Activated CD4-positive, alpha-beta T cell treated with anti-CD3 and anti-CD28 coated beads for 36 hours (primary cell): ENCODE measurements at regions of chr3 and their contacts with region 1.

Region 1: GRCh38 chr3:31768479-31769123 is 212.5 kb downstream of the OSBPL10 start:
- DNase-seq: peak; percentile 77
- ATAC-seq: peak; percentile 44
- H3K4me3 Mint-ChIP-seq: no peak overlapping the region
- H3K27ac Mint-ChIP-seq: no peak overlapping the region
- H3K4me1 Mint-ChIP-seq: peaks cover 50% of the 10 kb centered on the region
- H3K27me3 Mint-ChIP-seq: peaks cover 2% of the 10 kb centered on the region

Region 2: DNA sequence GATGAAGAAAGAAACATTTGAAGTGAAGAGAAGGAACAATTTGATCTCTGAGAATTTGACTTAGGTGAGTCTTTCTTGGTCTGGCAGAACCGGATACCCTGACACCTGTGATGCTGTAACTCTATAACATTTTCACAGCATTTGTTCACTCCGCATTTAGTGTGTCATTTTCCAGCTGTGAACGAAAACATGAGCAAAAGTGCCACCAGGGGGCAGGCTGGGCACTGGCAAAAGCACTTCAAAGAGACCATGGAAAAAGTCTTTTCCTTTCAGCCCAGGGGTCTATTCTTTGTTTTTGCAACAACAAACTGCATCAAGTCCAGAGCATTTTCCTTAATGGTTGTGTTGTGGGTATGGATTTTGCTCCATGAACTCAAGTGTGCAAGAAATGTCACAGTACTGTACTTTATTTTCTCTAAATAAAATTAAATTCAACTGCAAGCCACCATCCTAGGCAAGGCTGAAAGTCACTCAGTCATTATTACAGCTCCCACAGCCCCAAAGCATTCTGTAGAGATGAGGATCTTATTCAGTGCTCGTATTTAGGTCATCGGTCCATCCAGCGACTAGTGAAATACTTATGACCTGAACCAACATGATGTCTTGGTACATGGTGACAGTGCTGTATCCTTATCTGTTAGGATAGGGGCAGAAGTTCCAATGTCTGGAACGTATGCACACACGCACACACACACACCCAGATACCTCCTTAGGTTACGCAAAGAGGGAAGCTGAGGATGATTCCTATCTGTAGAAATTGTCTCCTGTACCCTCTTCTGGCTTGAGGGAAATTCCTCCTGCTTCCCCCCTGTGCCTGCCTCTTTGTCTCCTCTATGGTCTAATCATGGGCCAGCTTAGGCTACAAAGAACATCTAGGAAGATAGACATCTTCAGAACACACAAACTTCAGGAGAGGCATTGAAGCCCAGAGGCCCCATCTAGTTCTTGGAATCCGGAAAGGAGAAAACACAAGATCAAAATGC is 999.6 kb before region 1 on chr3:
- CTCF ChIA-PET with region 1: no interaction called
- POLR2A ChIA-PET with region 1: no interaction called
- intact Hi-C with region 1: loop called (anchors 5 kb)
- DNase-seq: peak; percentile 86
- ATAC-seq: peak; percentile 55
- H3K4me3 Mint-ChIP-seq: no peak overlapping the region
- H3K27ac Mint-ChIP-seq: no peak overlapping the region
- H3K4me1 Mint-ChIP-seq: no peaks in the 10 kb centered on the region
- H3K27me3 Mint-ChIP-seq: peaks cover 2% of the 10 kb centered on the region

Region 3: DNA sequence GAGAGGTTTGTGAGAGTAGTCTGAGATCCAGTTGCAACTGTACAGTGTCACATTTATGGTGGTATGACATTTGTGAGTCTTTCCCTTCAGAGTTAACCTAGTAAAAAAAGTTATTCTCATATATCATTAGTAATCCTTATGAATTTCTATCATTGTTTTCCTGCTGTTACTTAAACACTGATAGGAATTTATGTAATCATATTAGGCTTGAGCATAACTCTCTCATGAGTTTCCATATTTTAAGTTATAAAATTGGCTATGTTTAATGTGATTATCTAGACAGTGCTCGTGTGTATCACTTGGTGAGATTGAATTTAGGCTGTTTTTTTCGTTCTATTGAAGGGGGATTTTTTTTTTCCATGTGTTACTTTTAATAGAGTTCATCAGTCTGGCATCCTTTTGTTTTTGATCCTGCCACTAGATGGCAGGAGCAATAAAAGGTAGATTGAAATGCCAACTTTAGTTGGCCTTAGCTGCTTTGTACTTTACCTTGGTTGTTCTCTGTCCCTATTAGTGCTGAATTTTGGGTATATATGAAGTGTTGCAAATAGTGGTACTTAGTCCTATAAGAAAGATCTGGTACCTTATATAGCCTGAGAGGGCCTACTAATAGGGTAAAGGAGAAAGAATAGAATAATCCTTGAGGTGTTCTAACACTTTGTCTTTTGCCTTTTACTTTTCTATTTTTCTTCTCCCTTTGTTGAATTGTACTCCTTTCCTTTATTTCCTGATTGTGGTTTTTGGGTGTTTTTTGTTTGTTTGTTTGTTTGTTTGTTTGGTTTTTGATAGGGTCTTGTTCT is 217.9 kb before region 1 on chr3:
- CTCF ChIA-PET with region 1: no interaction called
- POLR2A ChIA-PET with region 1: no interaction called
- intact Hi-C with region 1: loop called (anchors 1 kb)
- DNase-seq: peak; percentile 21
- ATAC-seq: peak; percentile 69
- H3K4me3 Mint-ChIP-seq: no peak overlapping the region
- H3K27ac Mint-ChIP-seq: peak overlapping the region; percentile 43
- H3K4me1 Mint-ChIP-seq: peaks cover 80% of the 10 kb centered on the region
- H3K27me3 Mint-ChIP-seq: no peaks in the 10 kb centered on the region

Region 4: DNA sequence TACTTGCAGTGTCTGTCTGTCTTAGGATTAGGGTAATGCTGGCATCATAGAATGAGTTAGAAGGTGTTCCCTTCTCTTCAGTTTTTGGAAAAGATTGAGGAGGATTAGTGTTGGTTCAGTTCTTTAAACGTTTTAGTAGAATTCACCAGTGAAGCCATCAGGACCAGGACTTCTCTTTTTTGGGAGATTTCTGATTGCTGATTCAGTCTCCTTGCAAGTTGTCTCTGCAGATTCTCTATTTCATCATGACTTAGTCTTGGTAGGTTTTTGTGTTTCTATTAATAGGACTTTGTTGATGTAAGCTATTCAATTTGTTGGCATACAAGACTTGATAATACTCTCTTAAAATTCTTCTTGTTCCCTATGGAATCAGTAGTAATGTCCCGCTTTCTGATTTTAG is 186.9 kb before region 1 on chr3:
- CTCF ChIA-PET with region 1: no interaction called
- POLR2A ChIA-PET with region 1: no interaction called
- intact Hi-C with region 1: no loop called
- DNase-seq: no peak
- ATAC-seq: no peak
- H3K4me3 Mint-ChIP-seq: no peak overlapping the region
- H3K27ac Mint-ChIP-seq: peak overlapping the region; percentile 11
- H3K4me1 Mint-ChIP-seq: peaks cover 74% of the 10 kb centered on the region
- H3K27me3 Mint-ChIP-seq: no peaks in the 10 kb centered on the region

Region 5: GRCh38 chr3:31634481-31634880 is 134.1 kb before region 1 on chr3:
- CTCF ChIA-PET with region 1: no interaction called
- POLR2A ChIA-PET with region 1: no interaction called
- intact Hi-C with region 1: loop called (anchors 5 kb)
- DNase-seq: no peak
- ATAC-seq: no peak
- H3K4me3 Mint-ChIP-seq: no peak overlapping the region
- H3K27ac Mint-ChIP-seq: peak overlapping the region; percentile 3
- H3K4me1 Mint-ChIP-seq: peaks cover 41% of the 10 kb centered on the region
- H3K27me3 Mint-ChIP-seq: no peaks in the 10 kb centered on the region

Region 6: GRCh38 chr3:31831598-31831997 is 63.0 kb after region 1 on chr3:
- CTCF ChIA-PET with region 1: no interaction called
- POLR2A ChIA-PET with region 1: no interaction called
- intact Hi-C with region 1: no loop called
- DNase-seq: no peak
- ATAC-seq: no peak
- H3K4me3 Mint-ChIP-seq: no peak overlapping the region
- H3K27ac Mint-ChIP-seq: no peak overlapping the region
- H3K4me1 Mint-ChIP-seq: peaks cover 3% of the 10 kb centered on the region
- H3K27me3 Mint-ChIP-seq: no peaks in the 10 kb centered on the region

Region 7: DNA sequence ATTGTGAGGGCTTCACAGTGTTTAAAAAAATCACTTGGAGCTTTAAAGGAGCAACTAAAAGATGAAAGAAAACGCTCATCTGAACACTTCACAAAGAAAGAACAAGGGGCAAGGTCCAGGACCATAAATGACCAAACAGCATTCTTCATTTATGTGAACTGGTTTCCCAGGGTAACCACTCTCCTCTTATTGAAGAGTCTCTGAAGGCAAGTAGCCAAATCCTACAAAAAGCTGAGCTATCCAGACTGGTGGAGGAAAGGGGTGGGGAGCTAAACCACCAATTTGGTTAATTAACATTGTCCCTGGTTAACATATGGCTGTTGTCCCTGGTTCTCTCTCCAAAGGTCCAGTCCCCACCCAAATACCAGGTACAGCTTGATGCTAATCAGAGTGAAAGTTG is 154.4 kb after region 1 on chr3:
- CTCF ChIA-PET with region 1: no interaction called
- POLR2A ChIA-PET with region 1: no interaction called
- intact Hi-C with region 1: loop called (anchors 5 to 10 kb)
- DNase-seq: no peak
- ATAC-seq: no peak
- H3K4me3 Mint-ChIP-seq: no peak overlapping the region
- H3K27ac Mint-ChIP-seq: no peak overlapping the region
- H3K4me1 Mint-ChIP-seq: peaks cover 34% of the 10 kb centered on the region
- H3K27me3 Mint-ChIP-seq: peaks cover 2% of the 10 kb centered on the region